RWPE1 (cell line): ENCODE measurements at regions of chr17 and their contacts with region 1.

Region 1: GRCh38 chr17:42221937-42222745 is 27.8 kb upstream of the GHDC start:
- DNase-seq: no peak
- H3K27ac ChIP-seq: no peak overlapping the region
- CTCF ChIP-seq: peak; percentile 33; the same call in 1 of the 2 replicates

Region 2: DNA sequence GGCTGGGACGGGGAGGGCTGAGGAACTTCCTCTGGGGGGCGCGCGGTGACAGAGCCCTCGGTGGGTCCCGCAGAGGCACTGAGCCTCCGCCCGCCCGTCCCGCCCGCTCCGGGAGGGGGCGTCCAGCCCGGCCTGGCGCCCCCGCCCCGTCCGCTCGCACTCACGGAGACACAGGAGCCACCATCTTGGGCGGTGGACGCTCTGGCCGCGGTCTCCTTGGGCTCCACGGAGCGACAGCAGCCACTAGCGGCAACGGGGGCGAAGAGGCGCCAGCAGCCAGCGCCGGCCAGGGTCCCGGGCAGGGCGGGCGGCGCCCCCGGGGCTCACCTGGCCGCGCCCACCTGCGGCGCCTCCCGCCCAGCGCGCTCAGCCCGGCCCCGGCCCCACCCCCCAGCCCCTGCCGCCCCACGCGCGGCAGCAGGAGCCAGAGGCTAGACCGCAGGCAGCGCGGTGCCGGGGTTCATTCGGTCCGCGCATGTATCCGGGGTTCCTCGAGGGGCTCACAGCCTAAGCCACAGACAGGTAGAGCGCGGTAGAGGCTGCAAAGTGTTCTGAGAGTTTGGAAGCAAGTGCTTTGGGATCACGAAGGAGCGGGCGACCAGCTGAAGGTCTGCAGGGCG is 171.6 kb before region 1 on chr17 and contains the start of gene C17orf113:
- CTCF ChIA-PET with region 1: no interaction called
- POLR2A ChIA-PET with region 1: no interaction called
- DNase-seq: peak; percentile 55
- H3K27ac ChIP-seq: 0 out of 2 replicates have a peak within 1 kb of the TSS, but pooled peaks have one; percentile 12
- CTCF ChIP-seq: peak; percentile 69

Region 3: DNA sequence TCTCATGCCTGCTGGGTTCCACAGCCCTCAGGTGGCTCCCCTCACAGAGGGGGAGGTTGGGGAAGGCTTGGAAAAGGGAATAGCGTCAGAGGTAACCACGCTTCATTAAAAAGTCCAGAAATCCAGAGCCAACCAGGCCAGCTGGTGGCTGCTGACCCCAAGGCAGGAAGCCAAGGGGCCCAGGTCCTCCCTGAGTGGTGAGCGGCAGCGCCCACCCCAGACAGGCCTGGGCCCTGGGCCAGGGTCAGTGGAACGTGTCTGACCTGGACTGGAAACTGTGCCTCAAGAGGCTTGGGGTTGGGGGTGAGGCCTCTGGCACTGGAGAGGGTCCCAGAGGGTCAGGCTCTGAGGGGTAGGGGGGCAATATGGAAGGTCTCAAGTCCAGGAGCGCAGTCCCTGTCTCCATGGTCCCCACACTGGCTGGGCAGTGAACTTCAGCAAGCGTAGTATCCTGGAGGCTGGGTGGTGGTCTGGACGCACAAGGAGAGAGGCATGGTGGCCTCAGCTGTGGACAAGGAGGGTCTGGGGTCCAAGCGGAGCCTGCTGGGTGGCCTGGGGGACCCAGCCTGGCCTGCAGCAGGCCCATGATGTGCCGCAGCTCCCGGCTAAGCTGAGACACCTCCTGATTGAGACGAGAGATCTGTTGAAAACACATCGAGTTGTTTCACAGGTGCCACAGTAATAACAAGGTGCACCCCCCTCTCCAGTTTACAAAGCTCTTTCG is 62.2 kb before region 1 on chr17:
- CTCF ChIA-PET with region 1: no interaction called
- POLR2A ChIA-PET with region 1: no interaction called
- DNase-seq: no peak
- H3K27ac ChIP-seq: no peak overlapping the region
- CTCF ChIP-seq: no peak

Region 4: GRCh38 chr17:42171831-42172230 is 50.3 kb before region 1 on chr17:
- CTCF ChIA-PET with region 1: no interaction called
- POLR2A ChIA-PET with region 1: interaction called, 12 read pairs
- DNase-seq: peak; percentile 54
- H3K27ac ChIP-seq: no peak overlapping the region
- CTCF ChIP-seq: no peak